Endothelial cell of umbilical vein (primary cell): ENCODE measurements at regions of chr7 and their contacts with region 1.

Region 1: DNA sequence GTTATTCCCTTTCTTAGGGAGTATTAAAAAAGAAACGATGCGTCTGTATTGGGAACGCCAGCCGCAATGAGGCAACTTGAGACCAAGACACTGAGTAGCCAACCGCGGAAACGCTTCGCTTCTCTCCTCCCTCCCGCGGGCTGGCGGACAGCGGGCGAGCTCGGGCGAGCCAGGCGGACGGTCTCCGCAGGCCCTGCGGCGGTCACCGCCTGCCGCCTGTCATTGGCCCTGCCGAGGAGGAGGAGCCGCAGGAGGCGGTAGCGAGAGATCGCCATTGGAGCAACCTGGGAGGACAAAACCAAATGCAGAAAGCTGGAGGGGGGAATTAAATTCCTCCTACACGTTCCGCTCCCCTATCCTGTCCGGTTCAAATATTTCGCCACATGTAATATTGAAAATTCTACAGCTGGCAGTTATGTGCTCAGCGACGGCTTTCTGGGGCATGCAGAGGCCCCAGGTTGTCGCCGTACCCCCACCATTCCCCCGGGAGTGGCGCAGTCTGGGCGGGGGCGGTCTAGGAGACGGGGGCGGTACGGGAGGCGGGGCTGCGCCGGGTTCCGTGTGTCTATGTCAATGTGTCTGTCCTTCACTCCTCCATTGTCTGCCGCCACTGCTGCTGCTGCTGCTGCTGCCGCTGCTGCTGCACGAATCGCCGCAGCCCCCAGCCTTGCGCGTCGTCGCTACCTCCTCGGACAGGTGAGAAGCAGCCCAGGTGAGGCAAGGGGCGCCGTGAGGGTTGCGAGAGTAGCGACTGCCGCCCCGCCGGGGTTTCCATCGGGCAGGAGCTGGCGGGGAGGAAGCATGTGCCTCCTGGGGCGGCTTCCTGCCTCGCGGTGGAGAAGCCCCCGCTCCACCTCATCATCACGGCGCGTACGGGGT is at the starts of genes ANKMY2 and BZW2:
- DNase-seq: peak; percentile 97
- H3K4me3 ChIP-seq: peak within 1 kb of the TSS; percentile 74 to 98 (median 98)
- H3K27ac ChIP-seq: peak within 1 kb of the TSS; percentile 91
- H3K4me1 ChIP-seq: peaks cover 46% of the 10 kb centered on the region
- H3K27me3 ChIP-seq: no peaks in the 10 kb centered on the region
- CTCF ChIP-seq: no peak
- POLR2A ChIP-seq: peak; percentile 96
- total RNA-seq, gene ANKMY2: 9.8 and 11.6 TPM in 2 replicates
- total RNA-seq, gene BZW2: 95.3 and 106 TPM in 2 replicates

Region 2: DNA sequence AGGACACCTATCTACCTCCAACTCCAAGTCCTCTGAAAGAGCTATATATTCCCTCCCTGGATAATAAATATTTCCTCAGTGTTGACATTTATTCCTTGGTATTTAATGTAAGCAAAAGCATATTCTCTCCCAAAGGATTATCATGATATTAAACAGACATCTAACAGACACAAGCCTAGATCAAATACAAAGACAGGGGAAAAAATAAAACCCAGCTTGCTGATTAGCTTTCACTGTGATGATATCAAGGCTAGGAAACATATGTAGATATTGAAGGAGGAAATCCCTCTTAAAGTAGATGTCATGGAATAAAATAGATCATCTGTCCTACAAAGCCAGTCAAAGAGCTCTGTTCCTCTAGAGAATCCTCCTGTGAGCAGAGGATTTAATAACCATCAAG is 319.7 kb before region 1 on chr7:
- CTCF ChIA-PET with region 1: no interaction called
- POLR2A ChIA-PET with region 1: no interaction called
- dilution Hi-C with region 1: no loop called
- intact Hi-C with region 1: no loop called
- DNase-seq: no peak
- H3K4me3 ChIP-seq: no peak overlapping the region
- H3K27ac ChIP-seq: no peak overlapping the region
- H3K4me1 ChIP-seq: no peaks in the 10 kb centered on the region
- H3K27me3 ChIP-seq: no peaks in the 10 kb centered on the region
- CTCF ChIP-seq: no peak
- POLR2A ChIP-seq: no peak

Region 3: GRCh38 chr7:16657656-16658279 is 11.9 kb after region 1 on chr7:
- CTCF ChIA-PET with region 1: interaction called, 3 read pairs
- POLR2A ChIA-PET with region 1: no interaction called
- dilution Hi-C with region 1: no loop called
- intact Hi-C with region 1: loop called (anchors 1 kb)
- DNase-seq: no peak
- H3K4me3 ChIP-seq: no peak overlapping the region
- H3K27ac ChIP-seq: no peak overlapping the region
- H3K4me1 ChIP-seq: peaks cover 19% of the 10 kb centered on the region
- H3K27me3 ChIP-seq: no peaks in the 10 kb centered on the region
- CTCF ChIP-seq: no peak
- POLR2A ChIP-seq: no peak